ENCODE measurements at regions of chr6 and their contacts with region 1.

Region 1: DNA sequence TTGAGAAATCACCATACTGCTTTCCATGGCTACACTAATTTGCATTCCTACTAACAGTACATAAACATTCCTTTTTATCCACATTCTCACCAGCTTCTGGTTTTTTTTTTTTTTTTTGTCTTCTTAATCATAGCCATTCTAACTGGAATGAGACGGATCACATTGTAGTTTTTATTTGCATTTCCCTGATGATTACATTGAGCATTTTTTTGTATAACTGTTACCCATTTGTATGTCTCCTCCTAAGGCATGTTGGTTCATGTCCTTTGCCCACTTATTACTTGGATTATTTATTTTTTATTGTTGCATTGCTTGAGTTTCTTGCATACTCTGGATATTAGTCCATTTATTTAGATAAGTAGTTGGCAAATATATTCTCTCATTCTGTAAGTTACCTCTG is 258.0 kb downstream of the MEI4 start:
- DNase-seq: no peak
- ATAC-seq: no peak

Region 2: DNA sequence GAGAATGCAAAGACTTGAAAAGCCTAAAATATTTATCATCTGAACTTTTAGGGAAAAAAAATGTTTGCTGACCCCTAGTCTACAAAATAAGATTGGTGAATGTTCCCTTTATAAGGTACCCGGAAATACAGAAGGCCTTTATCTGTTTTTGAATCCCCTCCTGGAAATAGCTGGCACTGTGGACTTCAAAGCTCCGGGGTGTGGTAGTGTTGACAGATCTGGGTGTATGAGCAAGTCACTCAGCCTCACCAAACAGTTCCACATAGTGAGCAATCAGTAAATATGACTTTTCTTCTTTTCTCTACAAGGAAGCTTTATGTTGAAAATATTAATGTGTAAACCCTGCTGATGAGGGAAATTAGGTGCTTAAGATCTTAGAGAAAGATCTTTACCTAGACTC is 418.3 kb before region 1 on chr6:
- intact Hi-C with region 1: loop called in 1 of 2 experiments (anchors 5 kb)
- DNase-seq: peak in 1 of 2 donors; percentile 9
- ATAC-seq: peak; percentile 91

Measured in left colon (tissue), 2 donors.